PC-9 (cell line): ENCODE measurements at regions of chr2 and their contacts with region 1.

Region 1: DNA sequence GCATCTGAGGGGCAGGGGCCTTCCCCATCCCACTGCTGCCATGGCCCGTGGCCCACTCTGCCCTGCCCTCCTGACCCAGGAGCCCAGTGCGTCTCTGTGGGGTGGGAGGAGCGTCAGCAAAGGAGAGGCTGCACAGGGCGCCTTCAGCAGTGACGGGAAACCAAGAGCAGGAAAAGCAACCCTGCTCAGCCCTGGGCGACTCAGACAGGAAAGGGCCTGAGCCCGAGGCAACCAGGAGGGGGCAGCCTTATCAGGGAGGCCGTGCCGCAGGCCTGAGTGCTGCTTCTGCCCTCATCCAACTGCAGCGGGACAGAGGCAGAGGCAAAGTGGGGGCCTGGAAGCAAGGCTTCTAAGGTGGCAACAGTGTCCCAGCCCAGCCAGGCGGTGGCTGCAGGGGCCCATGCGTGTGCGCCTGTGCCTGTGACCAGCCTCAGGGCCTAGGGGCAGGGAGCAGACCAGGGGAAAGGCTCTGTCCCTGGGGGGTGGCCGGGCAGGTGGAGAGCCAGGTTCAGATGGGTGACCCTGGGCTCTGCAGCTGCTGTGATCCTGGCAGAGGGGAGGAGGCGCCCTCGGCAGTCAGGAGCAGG is 23.3 kb upstream of the ALPI start:
- DNase-seq: no peak
- H3K4me3 ChIP-seq: no peak overlapping the region
- H3K27ac ChIP-seq: no peak overlapping the region
- H3K4me1 ChIP-seq: peaks cover 10% of the 10 kb centered on the region
- H3K27me3 ChIP-seq: no peaks in the 10 kb centered on the region
- CTCF ChIP-seq: 0 out of 2 replicates have a peak, but pooled peaks have one; percentile 26

Region 2: DNA sequence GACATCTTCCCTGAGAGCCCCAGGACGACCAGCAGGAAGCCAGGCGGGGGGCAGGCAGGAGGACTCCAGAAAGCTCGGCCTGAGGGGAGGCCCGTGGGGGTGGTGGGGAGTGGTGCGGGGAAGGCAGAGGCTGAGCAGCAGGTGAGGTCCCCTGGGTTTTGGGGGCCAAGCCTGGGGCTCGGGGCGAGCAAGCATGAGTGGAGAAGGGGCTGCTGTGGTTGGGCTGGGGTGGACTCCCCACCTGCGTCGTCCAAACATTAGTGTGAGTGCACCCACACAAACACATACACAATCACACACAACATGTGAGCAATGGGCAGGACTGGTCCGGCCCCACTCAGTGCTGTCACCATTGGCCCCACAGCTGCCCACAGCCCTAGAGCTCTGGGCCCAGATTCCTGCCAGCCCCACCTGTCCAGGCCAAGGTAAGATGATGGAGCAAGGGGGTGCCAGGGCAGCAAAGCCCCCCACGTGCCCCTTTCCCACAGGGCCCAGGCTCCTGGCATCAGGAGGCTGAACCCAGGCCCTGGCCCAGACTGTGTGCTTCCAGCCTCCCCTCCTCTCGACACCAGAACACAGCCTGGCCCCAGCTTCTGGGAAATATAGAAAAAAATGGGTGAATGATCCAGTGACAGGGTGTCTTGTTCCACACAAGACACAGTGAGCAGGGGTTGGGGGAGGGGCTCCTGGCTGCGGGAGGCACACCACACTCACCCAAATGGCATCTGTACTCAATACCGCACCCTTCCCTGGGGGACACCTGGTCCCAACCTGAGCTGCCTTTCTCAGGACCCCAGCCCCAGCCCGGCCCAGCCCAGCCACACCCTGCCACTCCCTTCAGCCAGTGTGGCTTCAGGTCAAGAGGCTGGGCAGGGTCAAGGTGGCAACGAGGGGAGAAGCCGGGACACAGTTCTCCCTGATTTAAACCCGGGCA is 54.6 kb before region 1 on chr2:
- CTCF ChIA-PET with region 1: interaction called, 3 read pairs
- POLR2A ChIA-PET with region 1: interaction called, 15 read pairs
- intact Hi-C with region 1: no loop called
- DNase-seq: peak; percentile 89 to 94
- H3K4me3 ChIP-seq: no peak overlapping the region
- H3K27ac ChIP-seq: peak overlapping the region; percentile 54
- H3K4me1 ChIP-seq: peaks cover 20% of the 10 kb centered on the region
- H3K27me3 ChIP-seq: no peaks in the 10 kb centered on the region
- CTCF ChIP-seq: no peak

Region 3: GRCh38 chr2:232398293-232399034 is 34.2 kb before region 1 on chr2:
- CTCF ChIA-PET with region 1: no interaction called
- POLR2A ChIA-PET with region 1: interaction called, 11 read pairs
- intact Hi-C with region 1: no loop called
- DNase-seq: peak in 1 of 2 experiments; percentile 69
- H3K4me3 ChIP-seq: no peak overlapping the region
- H3K27ac ChIP-seq: peak overlapping the region; percentile 75
- H3K4me1 ChIP-seq: peaks cover 10% of the 10 kb centered on the region
- H3K27me3 ChIP-seq: no peaks in the 10 kb centered on the region
- CTCF ChIP-seq: no peak

Region 4: GRCh38 chr2:232418466-232419244 is 14.0 kb before region 1 on chr2:
- CTCF ChIA-PET with region 1: no interaction called
- POLR2A ChIA-PET with region 1: no interaction called
- intact Hi-C with region 1: no loop called
- DNase-seq: peak in 1 of 2 experiments; percentile 38
- H3K4me3 ChIP-seq: no peak overlapping the region
- H3K27ac ChIP-seq: no peak overlapping the region
- H3K4me1 ChIP-seq: peaks cover 11% of the 10 kb centered on the region
- H3K27me3 ChIP-seq: no peaks in the 10 kb centered on the region
- CTCF ChIP-seq: no peak